ENCODE measurements at regions of chr14 and their contacts with region 1.

Region 1: GRCh38 chr14:105375635-105376057 is 22.7 kb upstream of the TEX22 start:
- DNase-seq: no peak
- ATAC-seq: no peak
- H3K4me3 ChIP-seq: no peak overlapping the region
- H3K27ac ChIP-seq: no peak overlapping the region
- H3K4me1 ChIP-seq: no peaks in the 10 kb centered on the region
- H3K27me3 ChIP-seq: no peaks in the 10 kb centered on the region

Region 2: DNA sequence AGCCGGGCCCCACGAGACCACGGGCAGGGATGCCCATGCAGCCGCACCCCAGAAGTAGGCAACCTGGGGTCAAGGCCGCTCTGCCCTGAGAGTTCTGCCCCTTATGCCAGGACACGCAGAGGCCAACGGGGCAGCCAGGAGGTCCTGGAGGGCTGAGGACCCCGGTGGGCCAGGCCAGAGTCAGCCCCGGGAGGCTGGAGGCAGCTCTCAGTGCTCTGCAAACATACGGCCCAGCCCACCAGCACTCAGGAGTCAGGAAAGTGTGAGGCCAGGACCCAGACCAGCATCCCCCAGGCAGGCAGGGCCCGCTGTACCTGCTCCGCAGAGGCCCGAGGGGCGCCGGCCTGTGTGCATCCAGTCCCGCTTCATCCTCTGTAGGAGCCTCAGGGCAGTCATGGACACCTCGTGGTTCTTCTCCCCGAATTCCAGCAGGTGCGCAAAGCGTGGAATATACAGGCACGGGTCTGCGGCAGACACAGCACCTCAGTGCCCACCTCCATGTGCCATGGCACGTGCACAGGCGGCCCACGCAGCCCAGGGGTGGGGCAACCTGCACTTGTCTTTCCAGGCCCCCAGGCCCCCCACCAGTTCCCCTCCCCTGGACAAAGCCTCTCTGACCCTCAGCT is 134.6 kb before region 1 on chr14:
- intact Hi-C with region 1: no loop called
- DNase-seq: no peak
- ATAC-seq: no peak
- H3K4me3 ChIP-seq: no peak overlapping the region
- H3K27ac ChIP-seq: no peak overlapping the region
- H3K4me1 ChIP-seq: no peaks in the 10 kb centered on the region
- H3K27me3 ChIP-seq: no peaks in the 10 kb centered on the region

Region 3: GRCh38 chr14:105255021-105255507 is 120.6 kb before region 1 on chr14:
- intact Hi-C with region 1: no loop called
- DNase-seq: no peak
- ATAC-seq: no peak
- H3K4me3 ChIP-seq: no peak overlapping the region
- H3K27ac ChIP-seq: no peak overlapping the region
- H3K4me1 ChIP-seq: no peaks in the 10 kb centered on the region
- H3K27me3 ChIP-seq: no peaks in the 10 kb centered on the region

Region 4: DNA sequence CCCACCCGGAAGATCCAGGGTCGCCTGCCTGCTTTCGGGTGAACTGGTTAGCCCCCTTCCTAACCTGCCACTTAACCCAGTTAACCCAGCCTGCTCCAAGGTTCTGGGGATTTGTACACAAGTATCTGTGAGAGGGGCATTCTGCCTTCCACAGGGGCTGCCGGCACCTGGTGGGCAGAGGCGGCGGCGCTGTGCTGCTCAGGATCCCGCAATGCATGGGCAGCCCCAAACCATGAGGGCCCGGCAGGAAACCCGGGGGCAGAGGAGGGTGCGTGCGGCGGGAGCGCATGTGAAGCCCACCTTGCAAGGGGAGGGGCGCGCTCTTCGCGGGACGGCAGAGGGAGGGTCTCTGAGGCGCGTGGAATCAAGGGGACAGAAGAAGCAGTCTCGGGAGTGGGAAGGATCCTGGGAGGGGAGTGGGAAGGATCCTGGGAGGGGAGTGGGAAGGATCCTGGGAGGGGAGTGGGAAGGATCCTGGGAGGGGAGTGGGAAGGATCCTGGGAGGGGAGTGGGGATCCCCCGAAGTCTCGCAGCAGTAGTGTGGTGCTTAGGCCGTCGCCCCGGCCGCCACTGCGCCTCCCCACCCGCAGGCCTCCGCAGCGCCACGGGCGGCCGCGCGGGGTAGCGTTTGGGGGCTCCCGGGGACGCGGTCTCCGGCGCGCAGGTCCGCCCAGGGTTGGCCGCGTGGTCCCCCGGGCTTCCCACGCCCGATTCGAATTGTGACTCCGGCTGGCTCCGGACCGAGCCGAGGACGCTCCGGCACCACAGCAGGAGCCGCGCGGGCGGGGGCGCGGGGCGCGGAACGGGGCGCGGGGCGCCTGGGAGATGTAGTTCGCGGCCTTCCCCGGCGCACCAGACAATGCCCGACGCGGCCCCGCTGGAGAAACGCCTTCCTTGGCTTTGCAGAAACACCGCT is 39.1 kb after region 1 on chr14:
- intact Hi-C with region 1: loop called in 1 of 2 experiments (anchors 5 kb)
- DNase-seq: peak; percentile 86 to 94
- ATAC-seq: peak; percentile 81
- H3K4me3 ChIP-seq: peak overlapping the region in 1 of 2 donors; percentile 10
- H3K27ac ChIP-seq: no peak overlapping the region
- H3K4me1 ChIP-seq: no peaks in the 10 kb centered on the region
- H3K27me3 ChIP-seq: no peaks in the 10 kb centered on the region

Region 5: DNA sequence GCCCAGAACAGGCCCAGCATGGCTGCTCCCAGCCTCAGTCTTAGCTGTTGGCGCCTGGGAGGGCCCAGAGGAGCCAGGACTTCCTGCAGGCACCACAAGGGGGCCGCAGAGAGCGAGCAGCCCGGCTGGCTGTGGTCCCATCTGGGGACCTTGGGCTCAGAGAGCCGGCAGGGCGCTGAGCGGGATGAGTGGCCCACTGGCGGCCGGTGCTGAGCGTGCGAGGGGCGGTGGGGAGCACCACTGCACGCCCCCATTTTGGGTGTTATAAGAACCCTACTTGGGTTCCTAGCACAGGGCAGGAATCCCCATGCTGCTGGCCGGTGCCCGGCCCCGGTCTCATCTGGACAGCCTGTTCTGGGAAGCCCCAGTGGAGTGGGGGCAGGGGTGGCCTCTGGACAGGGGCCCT is 73.1 kb after region 1 on chr14:
- intact Hi-C with region 1: loop called in 1 of 2 experiments (anchors 10 kb)
- DNase-seq: peak; percentile 76 to 94
- ATAC-seq: peak; percentile 88
- H3K4me3 ChIP-seq: no peak overlapping the region
- H3K27ac ChIP-seq: no peak overlapping the region
- H3K4me1 ChIP-seq: no peaks in the 10 kb centered on the region
- H3K27me3 ChIP-seq: no peaks in the 10 kb centered on the region